Right cardiac atrium (tissue), 5 donors: ENCODE measurements at regions of chr15 and their contacts with region 1.

Region 1: DNA sequence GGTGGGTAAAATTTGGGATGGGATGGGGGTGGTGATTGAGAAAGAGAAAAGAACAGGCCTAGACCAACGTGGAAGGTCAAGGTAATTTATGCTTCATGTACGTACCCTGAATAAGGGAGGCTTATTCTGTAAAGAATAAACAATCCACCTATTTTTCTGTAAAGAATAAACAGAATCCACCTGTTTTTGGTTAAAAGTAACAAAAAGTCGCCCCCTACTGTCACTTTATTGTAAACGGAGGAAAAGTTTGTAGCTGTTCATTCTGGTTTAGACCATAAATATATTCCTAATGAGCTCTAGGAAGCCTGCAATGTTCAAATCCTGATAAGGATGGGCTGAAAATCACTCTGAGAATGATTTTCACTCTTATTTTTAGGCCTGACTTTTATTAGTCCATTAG is 23.5 kb upstream of the SQOR start:
- DNase-seq: no peak
- ATAC-seq: no peak
- H3K4me3 ChIP-seq: no peak overlapping the region
- H3K27ac ChIP-seq: no peak overlapping the region
- H3K4me1 ChIP-seq: no peaks in the 10 kb centered on the region
- H3K27me3 ChIP-seq: no peaks in the 10 kb centered on the region

Region 2: DNA sequence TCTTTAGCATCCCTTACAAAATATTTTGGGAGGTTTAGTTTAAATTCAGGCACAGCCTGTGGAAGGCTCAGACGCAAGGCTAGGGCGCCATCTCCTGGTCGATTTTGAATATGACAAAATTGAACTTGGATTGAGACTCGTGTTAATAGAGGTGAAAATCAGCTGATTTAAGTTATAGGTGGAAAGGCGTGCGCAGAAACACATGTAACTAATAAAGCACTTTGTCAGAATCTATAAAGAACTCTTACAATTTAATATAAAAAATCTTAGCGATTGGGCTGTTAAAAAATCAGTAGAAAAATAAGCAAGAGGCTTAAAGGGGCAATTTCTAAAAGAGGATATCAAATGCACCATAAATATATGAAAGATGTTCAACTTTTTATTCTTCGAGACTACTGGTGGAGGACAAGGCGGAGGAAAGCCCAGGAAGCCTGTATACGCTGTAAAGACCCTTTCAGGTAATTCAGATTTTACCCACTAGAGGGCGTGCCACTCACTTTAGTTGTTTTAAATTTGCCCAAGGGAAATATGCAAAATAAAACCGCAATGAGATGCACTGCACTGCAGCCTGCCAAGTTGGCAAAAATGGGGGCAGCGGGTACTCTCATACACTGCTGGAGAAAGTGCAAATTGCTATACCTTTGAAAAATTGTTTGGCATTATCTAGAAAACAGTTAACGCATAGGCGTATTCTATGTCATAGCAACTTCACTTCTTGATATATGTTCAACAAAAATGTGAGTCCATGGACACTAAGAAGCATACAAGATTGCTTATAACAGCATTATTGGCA is 153.5 kb before region 1 on chr15:
- intact Hi-C with region 1: loop called (anchors 2 to 10 kb)
- DNase-seq: peak; percentile 31 to 75 (median 68)
- ATAC-seq: peak; percentile 84 to 87
- H3K4me3 ChIP-seq: peak overlapping the region; percentile 94
- H3K27ac ChIP-seq: no peak overlapping the region
- H3K4me1 ChIP-seq: no peaks in the 10 kb centered on the region
- H3K27me3 ChIP-seq: no peaks in the 10 kb centered on the region

Region 3: DNA sequence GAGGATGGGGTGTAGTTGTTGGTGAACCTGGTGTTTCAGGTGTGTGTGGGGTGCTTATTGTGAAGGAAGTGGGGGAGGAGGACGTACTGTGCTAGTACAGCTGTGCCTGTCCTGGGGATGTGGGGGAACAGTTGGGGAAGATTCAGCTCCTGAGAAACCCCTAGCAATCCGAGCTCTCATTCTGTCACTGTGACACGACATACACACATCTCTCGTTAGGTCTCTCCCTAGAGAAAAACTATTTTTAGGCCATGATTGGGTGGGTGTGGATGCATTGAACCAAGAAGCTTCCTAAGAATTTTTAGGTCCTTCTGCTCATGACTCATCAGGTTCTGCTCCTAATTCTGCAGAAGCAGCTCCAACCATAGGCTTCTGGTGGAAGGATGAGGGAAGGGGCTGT is 143.0 kb before region 1 on chr15:
- intact Hi-C with region 1: loop called in 1 of 4 experiments (anchors 10 kb)
- DNase-seq: no peak
- ATAC-seq: no peak
- H3K4me3 ChIP-seq: no peak overlapping the region
- H3K27ac ChIP-seq: no peak overlapping the region
- H3K4me1 ChIP-seq: no peaks in the 10 kb centered on the region
- H3K27me3 ChIP-seq: no peaks in the 10 kb centered on the region

Region 4: GRCh38 chr15:45522328-45523160 is 88.8 kb before region 1 on chr15 and contains the start of gene SLC30A4:
- intact Hi-C with region 1: loop called in 1 of 4 experiments (anchors 10 kb)
- DNase-seq: peak; percentile 79 to 92 (median 91)
- ATAC-seq: peak; percentile 98
- H3K4me3 ChIP-seq: peak within 1 kb of the TSS; percentile 92
- H3K27ac ChIP-seq: peak within 1 kb of the TSS; percentile 85
- H3K4me1 ChIP-seq: peaks cover 2% of the 10 kb centered on the region
- H3K27me3 ChIP-seq: no peaks in the 10 kb centered on the region
- total RNA-seq, gene SLC30A4: 4.6 to 5.6 (median 5.3) TPM

Region 5: DNA sequence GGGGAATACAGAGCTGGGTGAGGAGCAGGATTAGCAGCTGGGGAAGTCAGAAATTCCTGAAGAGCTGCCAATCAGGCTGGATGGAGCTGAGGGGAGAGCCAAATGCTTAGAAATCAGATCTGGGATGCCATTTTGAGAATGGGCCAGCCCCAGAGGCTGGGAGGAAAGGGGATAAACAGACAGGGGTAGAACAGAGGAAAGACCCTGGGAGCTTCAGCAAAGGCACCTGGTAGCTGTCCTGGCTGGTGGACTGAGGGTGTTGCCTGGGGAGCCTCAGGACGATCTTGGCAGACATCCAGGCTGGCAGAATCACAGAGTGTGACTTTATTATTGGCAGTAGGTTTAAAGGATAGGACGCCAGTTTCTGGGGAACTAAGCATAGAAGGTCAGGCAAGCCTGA is 121.4 kb after region 1 on chr15:
- intact Hi-C with region 1: no loop called
- DNase-seq: peak; percentile 30 to 69 (median 60)
- ATAC-seq: peak; percentile 89 to 91
- H3K4me3 ChIP-seq: no peak overlapping the region
- H3K27ac ChIP-seq: peak overlapping the region; percentile 12
- H3K4me1 ChIP-seq: peaks cover 3% of the 10 kb centered on the region
- H3K27me3 ChIP-seq: no peaks in the 10 kb centered on the region